HEK293T (cell line): ENCODE measurements at regions of chr1 and their contacts with region 1.

Region 1: DNA sequence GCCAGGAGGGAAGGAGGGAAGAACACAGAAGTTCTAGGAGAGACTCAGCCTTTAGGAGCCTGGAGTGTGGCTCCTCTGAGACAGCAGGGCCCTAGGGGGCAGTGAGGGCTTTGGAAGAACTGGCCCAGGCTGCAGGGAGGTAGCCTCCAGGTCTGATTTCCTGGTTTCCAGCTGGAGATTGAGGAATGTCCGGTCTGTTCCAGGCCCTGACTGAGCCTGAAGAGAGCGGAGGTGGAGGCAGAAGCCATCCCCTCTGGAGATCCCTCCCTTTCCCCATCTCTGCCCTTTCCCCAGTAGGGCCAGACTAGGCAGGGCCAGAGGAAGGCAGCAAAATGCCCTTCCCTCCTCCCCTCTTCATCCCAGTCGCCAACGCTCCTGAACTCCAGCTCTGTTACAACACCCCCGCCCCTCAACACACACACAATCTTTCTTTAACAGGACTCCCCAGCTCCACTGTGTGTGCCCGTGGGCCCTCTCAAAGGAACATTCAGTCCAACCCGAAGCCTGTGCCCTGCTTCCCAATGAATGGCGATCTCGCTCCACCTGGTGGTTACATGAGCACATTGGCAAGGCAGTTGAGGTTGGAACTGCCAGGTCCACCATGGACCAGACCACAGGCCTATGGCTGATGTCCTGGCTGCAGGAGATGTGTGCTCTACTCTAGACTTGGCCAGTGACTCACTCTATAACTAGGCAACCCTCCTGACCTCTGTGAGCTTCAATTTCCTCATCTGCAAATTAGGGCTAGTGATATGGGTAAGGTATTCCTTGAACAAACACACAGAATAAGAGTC is 32.0 kb downstream of the MAP7D1 start:
- DNase-seq: peak; percentile 85

Region 2: GRCh38 chr1:36126797-36127500 is 61.0 kb before region 1 on chr1:
- CTCF ChIA-PET with region 1: no interaction called
- POLR2A ChIA-PET with region 1: no interaction called
- DNase-seq: no peak

Region 3: DNA sequence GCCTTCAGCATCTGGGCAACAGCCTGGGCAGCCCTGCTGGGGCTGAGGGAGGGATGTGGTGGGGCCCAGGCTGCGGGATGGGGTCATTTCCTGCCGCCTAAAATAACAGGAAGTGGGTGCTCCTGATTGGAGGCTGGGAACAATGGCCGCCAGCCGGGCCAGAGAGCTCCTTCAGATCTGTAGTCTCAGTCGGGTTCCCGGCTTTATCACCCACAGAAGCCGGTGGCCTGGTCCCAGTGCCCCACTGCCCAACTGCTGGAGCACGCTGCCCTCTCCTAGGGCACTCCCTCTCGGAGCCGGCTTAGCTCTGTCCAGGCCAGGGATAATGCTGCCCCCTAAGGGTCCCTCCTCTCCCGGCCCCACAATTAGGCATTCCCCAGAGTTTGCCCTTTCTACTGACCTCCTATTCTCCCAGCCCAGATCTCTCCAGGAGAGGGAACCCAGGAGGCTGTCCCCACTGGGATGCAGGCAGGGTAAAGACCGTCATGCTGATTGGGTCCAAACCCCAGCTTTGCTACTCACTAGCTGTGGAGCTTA is 27.0 kb before region 1 on chr1:
- CTCF ChIA-PET with region 1: interaction called, 20 read pairs
- POLR2A ChIA-PET with region 1: interaction called, 8 read pairs
- DNase-seq: no peak

Region 4: GRCh38 chr1:36203554-36204346 is 15.8 kb after region 1 on chr1:
- CTCF ChIA-PET with region 1: no interaction called
- POLR2A ChIA-PET with region 1: no interaction called
- DNase-seq: no peak